ENCODE measurements at regions of chr19 and their contacts with region 1.

Region 1: DNA sequence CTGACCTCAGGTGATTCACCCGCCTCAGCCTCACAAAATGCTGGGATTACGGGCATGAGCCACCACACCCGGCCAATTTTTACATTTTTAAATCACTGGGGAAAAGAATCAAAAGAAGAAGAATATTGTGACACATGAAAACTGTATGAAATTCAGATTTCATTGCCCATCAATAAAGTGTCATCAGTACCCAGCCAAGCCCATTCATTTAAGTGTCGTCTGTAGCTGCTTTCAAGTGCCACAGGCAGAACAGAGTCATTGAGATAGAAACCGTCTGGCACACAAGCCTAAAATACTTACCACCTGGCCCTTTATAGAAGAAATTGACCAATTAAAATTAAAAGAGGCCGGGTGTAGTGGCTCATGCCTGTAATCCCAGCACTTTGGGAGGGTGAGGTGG is 15.3 kb downstream of the COLGALT1 start:
- DNase-seq: no peak
- ATAC-seq: no peak
- H3K4me3 ChIP-seq: no peak overlapping the region
- H3K4me3 Mint-ChIP-seq: no peak overlapping the region
- H3K27ac ChIP-seq: no peak overlapping the region
- H3K27ac Mint-ChIP-seq: no peak overlapping the region
- H3K4me1 ChIP-seq: no peaks in the 10 kb centered on the region
- H3K4me1 Mint-ChIP-seq: peaks cover 3% of the 10 kb centered on the region
- H3K27me3 ChIP-seq: no peaks in the 10 kb centered on the region
- H3K27me3 Mint-ChIP-seq: no peaks in the 10 kb centered on the region
- CTCF ChIP-seq: no peak

Region 2: GRCh38 chr19:17441241-17442021 is 129.4 kb before region 1 on chr19:
- CTCF ChIA-PET with region 1: interaction called, 10 read pairs
- POLR2A ChIA-PET with region 1: no interaction called
- intact Hi-C with region 1: loop called (anchors 1 kb)
- DNase-seq: peak in 5 of 9 experiments; percentile 21 to 64 (median 52)
- ATAC-seq: peak; percentile 69
- H3K4me3 ChIP-seq: no peak overlapping the region
- H3K4me3 Mint-ChIP-seq: no peak overlapping the region
- H3K27ac ChIP-seq: no peak overlapping the region
- H3K27ac Mint-ChIP-seq: no peak overlapping the region
- H3K4me1 ChIP-seq: no peaks in the 10 kb centered on the region
- H3K4me1 Mint-ChIP-seq: no peaks in the 10 kb centered on the region
- H3K27me3 ChIP-seq: no peaks in the 10 kb centered on the region
- H3K27me3 Mint-ChIP-seq: no peaks in the 10 kb centered on the region
- CTCF ChIP-seq: peak; percentile 33

Region 3: GRCh38 chr19:17482001-17482400 is 88.8 kb before region 1 on chr19:
- CTCF ChIA-PET with region 1: no interaction called
- POLR2A ChIA-PET with region 1: no interaction called
- intact Hi-C with region 1: no loop called
- DNase-seq: no peak
- ATAC-seq: no peak
- H3K4me3 ChIP-seq: no peak overlapping the region
- H3K4me3 Mint-ChIP-seq: no peak overlapping the region
- H3K27ac ChIP-seq: no peak overlapping the region
- H3K27ac Mint-ChIP-seq: no peak overlapping the region
- H3K4me1 ChIP-seq: no peaks in the 10 kb centered on the region
- H3K4me1 Mint-ChIP-seq: peaks cover 7% of the 10 kb centered on the region
- H3K27me3 ChIP-seq: no peaks in the 10 kb centered on the region
- H3K27me3 Mint-ChIP-seq: no peaks in the 10 kb centered on the region
- CTCF ChIP-seq: no peak

Measured in CD8-positive, alpha-beta T cell (primary cell).